ENCODE measurements at regions of chr13 and their contacts with region 1.

Region 1: GRCh38 chr13:26996965-26997752 is 174.5 kb downstream of the USP12 start:
- DNase-seq: no peak
- ATAC-seq: no peak

Region 2: DNA sequence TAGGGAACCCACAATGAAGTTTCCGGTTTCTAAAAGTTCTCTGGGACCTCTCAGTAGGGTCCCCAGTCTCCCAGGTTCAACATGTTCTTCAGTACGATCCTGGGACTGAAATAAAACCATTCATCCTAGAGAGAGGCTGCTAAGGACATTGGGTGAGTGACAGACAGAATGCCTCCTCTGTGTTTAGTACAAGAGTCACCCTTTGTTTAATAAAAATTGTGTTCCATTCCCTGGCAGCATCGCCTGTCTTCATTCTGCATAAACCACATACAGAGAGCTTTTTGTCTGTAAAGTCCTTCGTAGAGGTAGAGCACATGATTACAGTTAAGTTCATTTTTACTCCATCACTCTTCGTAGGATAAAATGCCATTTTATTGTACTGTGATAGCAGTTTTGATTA is 141.2 kb before region 1 on chr13:
- intact Hi-C with region 1: no loop called
- DNase-seq: no peak
- ATAC-seq: no peak

Region 3: DNA sequence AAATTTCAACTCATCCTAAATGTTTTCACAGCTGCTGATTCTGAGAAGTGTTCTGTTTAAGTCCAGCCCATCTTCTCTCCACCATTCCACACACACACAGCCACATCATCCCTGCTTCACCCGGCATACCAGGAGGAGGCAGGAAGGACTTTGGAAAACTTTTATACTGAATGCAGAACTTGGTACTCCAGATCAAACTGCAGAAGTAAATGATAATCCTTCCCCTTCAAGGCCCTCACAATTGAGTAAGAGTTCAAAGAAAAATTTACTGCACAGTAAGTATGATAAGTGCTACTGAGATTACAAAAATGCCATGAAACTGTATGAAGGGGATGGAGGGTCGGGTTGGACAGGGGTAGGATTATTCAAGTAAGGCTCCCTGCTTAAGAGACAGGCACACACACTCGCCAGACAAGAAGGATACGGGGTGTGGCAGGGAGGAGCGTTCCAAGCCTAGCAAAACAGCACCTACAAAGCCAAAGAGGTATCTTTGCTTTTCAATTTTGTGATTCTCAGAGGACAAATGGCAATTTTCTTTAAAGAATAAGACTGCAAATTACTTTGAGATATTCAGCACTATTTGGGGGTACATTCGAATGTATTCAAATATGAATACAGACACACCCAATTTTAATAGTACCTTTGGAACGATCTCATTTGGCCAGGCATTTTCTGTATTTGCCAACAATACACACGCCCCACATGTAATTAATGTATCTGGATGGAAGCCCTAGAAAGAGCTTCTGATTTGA is 171.9 kb after region 1 on chr13:
- intact Hi-C with region 1: loop called in 1 of 2 experiments (anchors 10 kb)
- DNase-seq: peak in 1 of 2 donors; percentile 44
- ATAC-seq: peak; percentile 25